ENCODE measurements at regions of chr1 and their contacts with region 1.

Region 1: DNA sequence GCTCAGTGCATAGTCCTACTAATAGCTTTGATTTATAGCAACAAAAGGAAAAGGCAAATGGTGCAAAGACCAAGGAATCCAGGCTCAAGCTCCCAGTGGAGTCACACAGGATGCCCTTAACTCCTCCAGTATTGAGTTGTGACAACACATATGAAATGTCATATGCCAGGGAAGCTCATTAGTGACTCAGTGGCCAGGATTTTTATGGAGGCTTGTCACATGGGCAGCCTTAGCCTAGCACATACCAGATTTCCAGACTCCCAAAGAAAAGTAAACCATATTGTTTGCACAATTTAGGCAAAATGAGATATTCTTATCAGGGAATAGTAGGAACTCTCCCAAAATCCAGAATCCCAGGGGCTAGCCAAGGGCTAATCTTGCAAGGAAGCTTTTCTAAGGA is 129.2 kb downstream of the MAGI3 start:
- DNase-seq: no peak
- ATAC-seq: no peak

Region 2: DNA sequence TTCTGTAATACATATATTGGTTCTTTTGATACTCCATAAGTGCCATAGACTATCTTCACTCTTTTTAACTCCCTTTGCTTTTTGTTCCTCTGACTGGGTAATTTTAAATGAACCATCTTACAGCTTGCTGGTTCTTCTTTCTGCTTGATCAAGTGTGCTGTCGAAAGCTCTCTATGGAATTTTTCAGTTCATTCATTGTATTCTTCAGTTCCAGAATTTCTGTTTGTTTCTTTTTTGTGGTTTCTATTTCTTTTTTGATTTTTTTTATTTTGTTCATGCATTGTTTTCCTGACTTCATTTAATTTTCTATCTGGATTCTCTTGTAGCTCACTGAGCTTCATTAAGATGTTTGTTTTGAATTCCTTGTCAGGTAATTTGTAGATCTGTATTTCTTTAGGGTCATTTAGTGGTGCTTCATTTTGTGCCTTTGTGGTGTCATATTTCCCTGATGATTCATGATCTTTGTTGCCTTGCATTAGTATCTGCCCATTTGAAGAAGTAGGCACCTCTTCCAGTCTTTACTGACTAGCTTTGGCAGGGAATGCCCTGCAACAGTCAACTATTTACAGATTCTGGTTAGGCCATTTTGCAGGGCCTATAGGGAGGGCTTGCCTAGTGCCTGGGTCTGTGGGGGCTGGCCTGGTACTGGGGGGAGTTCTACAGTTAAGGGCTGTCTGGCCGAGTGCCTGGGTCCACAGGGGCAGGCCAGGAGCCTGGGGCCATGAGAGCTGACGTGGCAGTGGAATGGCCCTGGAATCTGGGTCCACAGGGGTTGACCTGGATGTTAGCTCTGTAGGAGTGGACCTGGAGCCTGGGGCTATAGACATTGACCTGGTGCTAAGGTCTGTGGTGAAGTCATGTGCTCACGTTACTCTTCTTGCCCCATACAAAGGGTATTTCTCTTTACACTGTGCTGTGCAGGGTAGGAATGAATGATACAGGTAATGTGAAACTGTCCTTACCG is 39.6 kb before region 1 on chr1:
- intact Hi-C with region 1: loop called in 1 of 2 experiments (anchors 5 kb)
- DNase-seq: no peak
- ATAC-seq: no peak

Measured in left cardiac atrium (tissue), 4 donors.